ENCODE measurements at regions of chr20 and their contacts with region 1.

Region 1: DNA sequence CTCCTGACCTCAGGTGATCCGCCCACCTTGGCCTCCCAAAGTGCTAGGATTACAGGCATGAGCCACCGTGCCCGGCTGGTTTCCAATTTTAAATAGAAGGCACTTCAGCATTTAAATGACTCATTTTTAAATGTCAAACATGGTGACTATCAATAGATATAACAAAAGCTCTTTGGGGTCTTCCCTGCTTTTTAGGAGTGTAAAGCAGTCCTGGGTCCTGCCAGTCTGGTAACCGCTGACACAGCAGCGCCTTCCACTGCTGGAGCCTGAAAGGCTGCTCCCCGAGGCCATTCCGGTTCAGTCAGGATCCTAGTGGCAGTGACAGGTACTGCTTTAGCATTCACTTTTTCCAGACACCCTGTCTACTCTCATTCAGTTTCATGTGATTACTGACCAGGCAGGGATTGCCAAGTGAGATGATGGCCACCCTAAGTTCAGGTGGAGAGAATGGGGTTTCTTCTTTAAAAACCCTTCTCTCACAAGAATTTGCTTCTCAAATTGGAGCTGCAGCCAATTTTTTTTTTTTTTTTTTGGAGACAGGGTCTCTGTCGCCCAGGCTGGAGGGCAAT is 5.1 kb downstream of the DIDO1 start:
- DNase-seq: peak in 13 of 14 experiments; percentile 32 to 85 (median 51)
- ATAC-seq: peak; percentile 67
- H3K4me3 ChIP-seq: no peak overlapping the region
- H3K4me3 Mint-ChIP-seq: peak overlapping the region; percentile 86
- H3K27ac ChIP-seq: peak overlapping the region; percentile 1 to 29
- H3K27ac Mint-ChIP-seq: peak overlapping the region; percentile 82
- H3K4me1 ChIP-seq: peaks cover 79% of the 10 kb centered on the region
- H3K4me1 Mint-ChIP-seq: peaks cover 89% of the 10 kb centered on the region
- H3K27me3 ChIP-seq: no peaks in the 10 kb centered on the region
- H3K27me3 Mint-ChIP-seq: no peaks in the 10 kb centered on the region
- CTCF ChIP-seq: peak; percentile 66

Region 2: DNA sequence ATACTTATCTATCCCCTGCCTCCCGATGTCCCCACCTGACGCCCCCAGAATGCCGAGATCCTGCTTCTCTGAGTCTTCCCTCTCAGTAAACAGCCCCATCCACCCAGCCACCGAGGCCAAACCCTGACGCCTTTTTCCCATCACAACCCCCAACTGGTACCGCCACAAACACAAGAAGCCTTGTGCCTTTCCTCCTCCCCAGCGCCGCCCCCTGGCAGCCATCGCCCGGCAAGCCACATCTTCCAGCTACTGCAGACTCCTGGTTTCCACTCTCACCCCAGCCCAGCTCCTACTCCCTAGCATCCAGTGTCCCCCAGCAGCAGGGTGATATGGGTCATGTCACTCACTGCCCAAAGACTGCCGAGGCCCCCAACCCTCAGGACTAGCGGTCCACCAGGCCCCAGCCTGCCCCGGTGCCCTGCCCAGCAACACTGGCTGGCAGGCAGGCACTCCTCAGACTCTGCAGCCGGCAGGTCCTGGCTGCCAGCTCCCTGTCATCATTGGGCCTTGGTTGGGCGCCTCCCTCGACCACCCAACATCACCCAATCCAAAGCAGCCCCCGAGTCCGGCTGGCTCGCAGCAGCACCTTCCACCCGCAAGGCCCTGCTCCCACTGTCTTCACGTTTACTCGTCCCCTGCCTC is 70.7 kb before region 1 on chr20:
- CTCF ChIA-PET with region 1: no interaction called
- POLR2A ChIA-PET with region 1: no interaction called
- intact Hi-C with region 1: no loop called
- DNase-seq: no peak
- ATAC-seq: no peak
- H3K4me3 ChIP-seq: no peak overlapping the region
- H3K4me3 Mint-ChIP-seq: no peak overlapping the region
- H3K27ac ChIP-seq: no peak overlapping the region
- H3K27ac Mint-ChIP-seq: no peak overlapping the region
- H3K4me1 ChIP-seq: no peaks in the 10 kb centered on the region
- H3K4me1 Mint-ChIP-seq: no peaks in the 10 kb centered on the region
- H3K27me3 ChIP-seq: no peaks in the 10 kb centered on the region
- H3K27me3 Mint-ChIP-seq: no peaks in the 10 kb centered on the region
- CTCF ChIP-seq: no peak

Region 3: GRCh38 chr20:62900052-62900691 is 21.0 kb before region 1 on chr20:
- CTCF ChIA-PET with region 1: interaction called, 38 read pairs
- POLR2A ChIA-PET with region 1: interaction called, 14 read pairs
- intact Hi-C with region 1: loop called (anchors 1 to 2 kb)
- DNase-seq: peak; percentile 63 to 89 (median 76)
- ATAC-seq: peak; percentile 89
- H3K4me3 ChIP-seq: no peak overlapping the region
- H3K4me3 Mint-ChIP-seq: peak overlapping the region; percentile 71
- H3K27ac ChIP-seq: peak overlapping the region; percentile 8 to 47
- H3K27ac Mint-ChIP-seq: peak overlapping the region; percentile 92
- H3K4me1 ChIP-seq: peaks cover 29% of the 10 kb centered on the region
- H3K4me1 Mint-ChIP-seq: peaks cover 40% of the 10 kb centered on the region
- H3K27me3 ChIP-seq: no peaks in the 10 kb centered on the region
- H3K27me3 Mint-ChIP-seq: no peaks in the 10 kb centered on the region
- CTCF ChIP-seq: peak; percentile 96

Region 4: GRCh38 chr20:62907384-62908317 is 13.6 kb before region 1 on chr20:
- CTCF ChIA-PET with region 1: interaction called, 21 read pairs
- POLR2A ChIA-PET with region 1: interaction called, 14 read pairs
- intact Hi-C with region 1: no loop called
- DNase-seq: peak in 6 of 14 experiments; percentile 28 to 70 (median 42)
- ATAC-seq: peak; percentile 78
- H3K4me3 ChIP-seq: no peak overlapping the region
- H3K4me3 Mint-ChIP-seq: no peak overlapping the region
- H3K27ac ChIP-seq: no peak overlapping the region
- H3K27ac Mint-ChIP-seq: peak overlapping the region; percentile 43
- H3K4me1 ChIP-seq: peaks cover 12% of the 10 kb centered on the region
- H3K4me1 Mint-ChIP-seq: peaks cover 34% of the 10 kb centered on the region
- H3K27me3 ChIP-seq: no peaks in the 10 kb centered on the region
- H3K27me3 Mint-ChIP-seq: no peaks in the 10 kb centered on the region
- CTCF ChIP-seq: peak; percentile 55